ENCODE measurements at regions of chr16 and their contacts with region 1.

Region 1: DNA sequence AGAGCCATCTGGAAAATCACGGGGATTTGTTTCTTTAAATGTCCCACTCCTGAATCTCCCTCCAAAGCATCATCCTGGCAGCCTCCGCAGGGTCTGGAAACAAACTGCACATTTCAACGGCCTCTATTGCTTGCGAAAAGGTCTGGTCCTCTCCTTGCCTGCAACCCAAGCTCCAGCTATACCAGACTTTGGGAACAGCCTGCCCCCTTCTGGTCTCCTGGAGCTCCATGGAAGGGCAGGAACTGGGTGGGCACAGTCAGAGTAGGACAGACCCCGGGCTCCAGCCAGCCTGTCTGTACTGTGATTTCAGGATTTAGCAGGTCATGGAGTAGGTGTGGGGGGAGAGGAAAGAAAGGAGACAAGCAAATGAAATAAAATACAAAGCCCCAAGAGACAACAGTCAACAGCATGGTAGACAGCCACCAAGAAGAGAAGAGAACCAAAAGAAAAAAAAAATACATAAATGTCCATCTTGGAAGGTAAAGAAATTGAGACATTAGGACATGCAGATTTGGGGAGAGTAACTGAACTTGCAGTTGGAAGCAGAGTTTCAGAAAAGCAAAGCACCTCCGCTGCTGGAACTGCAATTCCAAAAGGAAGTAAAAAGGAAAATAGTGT is 2.7 kb downstream of the XYLT1 start:
- DNase-seq: peak in 12 of 14 experiments; percentile 18 to 67 (median 44)
- ATAC-seq: no peak
- H3K4me3 ChIP-seq: peak overlapping the region; percentile 2
- H3K4me3 Mint-ChIP-seq: peak overlapping the region; percentile 98
- H3K27ac ChIP-seq: no peak overlapping the region
- H3K27ac Mint-ChIP-seq: peak overlapping the region; percentile 85
- H3K4me1 ChIP-seq: peaks cover 34% of the 10 kb centered on the region
- H3K4me1 Mint-ChIP-seq: peaks cover 58% of the 10 kb centered on the region
- H3K27me3 ChIP-seq: no peaks in the 10 kb centered on the region
- H3K27me3 Mint-ChIP-seq: no peaks in the 10 kb centered on the region
- CTCF ChIP-seq: peak; percentile 48

Region 2: GRCh38 chr16:17194190-17194780 is 273.7 kb before region 1 on chr16:
- CTCF ChIA-PET with region 1: no interaction called
- POLR2A ChIA-PET with region 1: interaction called, 4 read pairs
- intact Hi-C with region 1: loop called in 1 of 2 experiments (anchors 2 kb)
- DNase-seq: peak; percentile 36 to 77 (median 50)
- ATAC-seq: no peak
- H3K4me3 ChIP-seq: no peak overlapping the region
- H3K4me3 Mint-ChIP-seq: no peak overlapping the region
- H3K27ac ChIP-seq: no peak overlapping the region
- H3K27ac Mint-ChIP-seq: no peak overlapping the region
- H3K4me1 ChIP-seq: no peaks in the 10 kb centered on the region
- H3K4me1 Mint-ChIP-seq: no peaks in the 10 kb centered on the region
- H3K27me3 ChIP-seq: no peaks in the 10 kb centered on the region
- H3K27me3 Mint-ChIP-seq: no peaks in the 10 kb centered on the region
- CTCF ChIP-seq: peak; percentile 73

Region 3: GRCh38 chr16:17211797-17212196 is 256.2 kb before region 1 on chr16:
- CTCF ChIA-PET with region 1: no interaction called
- POLR2A ChIA-PET with region 1: no interaction called
- intact Hi-C with region 1: loop called (anchors 5 to 10 kb)
- DNase-seq: peak; percentile 3 to 64 (median 20)
- ATAC-seq: peak; percentile 65
- H3K4me3 ChIP-seq: no peak overlapping the region
- H3K4me3 Mint-ChIP-seq: no peak overlapping the region
- H3K27ac ChIP-seq: no peak overlapping the region
- H3K27ac Mint-ChIP-seq: no peak overlapping the region
- H3K4me1 ChIP-seq: peaks cover 7% of the 10 kb centered on the region
- H3K4me1 Mint-ChIP-seq: peaks cover 31% of the 10 kb centered on the region
- H3K27me3 ChIP-seq: no peaks in the 10 kb centered on the region
- H3K27me3 Mint-ChIP-seq: no peaks in the 10 kb centered on the region
- CTCF ChIP-seq: peak; percentile 63

Region 4: GRCh38 chr16:17343028-17343427 is 125.0 kb before region 1 on chr16:
- CTCF ChIA-PET with region 1: no interaction called
- POLR2A ChIA-PET with region 1: interaction called, 3 read pairs
- intact Hi-C with region 1: loop called in 1 of 2 experiments (anchors 5 kb)
- DNase-seq: peak in 11 of 14 experiments; percentile 6 to 76 (median 34)
- ATAC-seq: peak; percentile 83
- H3K4me3 ChIP-seq: no peak overlapping the region
- H3K4me3 Mint-ChIP-seq: peak overlapping the region; percentile 75
- H3K27ac ChIP-seq: no peak overlapping the region
- H3K27ac Mint-ChIP-seq: peak overlapping the region; percentile 86
- H3K4me1 ChIP-seq: peaks cover 72% of the 10 kb centered on the region
- H3K4me1 Mint-ChIP-seq: peaks cover 89% of the 10 kb centered on the region
- H3K27me3 ChIP-seq: no peaks in the 10 kb centered on the region
- H3K27me3 Mint-ChIP-seq: no peaks in the 10 kb centered on the region
- CTCF ChIP-seq: no peak

Region 5: DNA sequence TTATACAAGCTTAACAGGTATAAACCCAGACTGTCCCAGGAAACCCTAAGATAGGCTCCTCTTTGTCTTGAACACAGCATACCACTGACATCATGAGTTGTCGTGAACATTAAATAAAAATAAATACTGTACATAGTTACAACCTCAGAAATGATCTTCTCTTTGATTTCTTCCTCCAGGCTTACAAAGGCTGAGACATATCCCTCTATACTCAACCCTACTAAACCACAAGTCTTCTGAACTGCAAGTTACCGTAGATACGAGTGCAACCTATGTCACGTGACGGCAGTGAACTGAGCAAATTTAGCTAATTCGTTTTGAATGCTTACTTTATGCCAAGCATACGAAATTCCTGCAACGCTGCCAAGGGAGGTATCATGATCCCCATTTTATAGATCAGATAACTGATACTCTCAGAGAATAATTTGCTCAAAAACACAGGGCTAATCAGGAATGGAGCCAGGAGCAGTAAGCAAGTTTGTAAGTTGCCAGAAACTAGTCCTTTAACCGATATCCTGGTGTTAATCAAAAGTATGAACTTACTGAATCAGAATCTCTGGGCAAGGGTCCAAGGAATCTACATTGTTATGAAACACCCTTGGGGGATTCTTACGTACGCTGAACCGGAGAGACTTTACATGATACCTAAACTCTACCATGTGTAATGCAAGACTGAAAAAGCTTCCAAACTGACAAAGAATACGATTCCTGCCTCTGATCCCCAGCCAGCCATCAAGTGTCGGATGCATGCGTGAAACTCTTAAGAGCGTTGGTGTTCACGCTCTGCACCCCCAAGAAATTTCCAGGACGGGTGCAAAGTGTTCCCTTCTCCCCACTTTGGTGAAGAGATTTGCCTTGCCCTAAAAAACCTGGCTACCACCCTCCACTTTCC is 103.5 kb before region 1 on chr16:
- CTCF ChIA-PET with region 1: no interaction called
- POLR2A ChIA-PET with region 1: interaction called, 19 read pairs
- intact Hi-C with region 1: loop called (anchors 1 to 5 kb)
- DNase-seq: peak in 13 of 14 experiments; percentile 37 to 92 (median 54)
- ATAC-seq: peak; percentile 82
- H3K4me3 ChIP-seq: peak overlapping the region; percentile 8
- H3K4me3 Mint-ChIP-seq: peak overlapping the region; percentile 40
- H3K27ac ChIP-seq: peak overlapping the region; percentile 89 to 92
- H3K27ac Mint-ChIP-seq: peak overlapping the region; percentile 93
- H3K4me1 ChIP-seq: peaks cover 91% of the 10 kb centered on the region
- H3K4me1 Mint-ChIP-seq: peaks cover 99% of the 10 kb centered on the region
- H3K27me3 ChIP-seq: no peaks in the 10 kb centered on the region
- H3K27me3 Mint-ChIP-seq: no peaks in the 10 kb centered on the region
- CTCF ChIP-seq: no peak

Region 6: DNA sequence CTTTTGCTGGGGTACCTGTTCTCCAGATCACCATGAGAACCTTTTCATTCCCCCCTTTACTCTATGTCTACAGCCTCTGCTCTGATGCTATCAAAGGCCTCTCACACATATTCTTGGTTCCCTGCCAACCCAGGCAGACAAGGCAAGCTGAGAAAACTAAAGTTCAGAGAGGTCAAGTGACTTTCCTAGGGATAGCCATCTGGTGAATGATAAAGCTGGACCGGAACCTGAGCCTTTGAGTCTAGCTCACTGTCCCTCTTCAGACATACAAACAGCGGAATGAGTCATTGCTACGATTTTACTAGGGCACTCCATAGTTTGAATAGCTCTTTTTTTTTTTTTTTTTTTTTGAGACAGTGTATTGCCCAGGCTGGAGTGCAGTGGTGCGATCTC is 70.5 kb before region 1 on chr16:
- CTCF ChIA-PET with region 1: no interaction called
- POLR2A ChIA-PET with region 1: no interaction called
- intact Hi-C with region 1: loop called in 1 of 2 experiments (anchors 5 kb)
- DNase-seq: peak in 7 of 14 experiments; percentile 15 to 71 (median 35)
- ATAC-seq: peak; percentile 19
- H3K4me3 ChIP-seq: no peak overlapping the region
- H3K4me3 Mint-ChIP-seq: peak overlapping the region; percentile 82
- H3K27ac ChIP-seq: peak overlapping the region; percentile 59 to 89
- H3K27ac Mint-ChIP-seq: peak overlapping the region; percentile 99
- H3K4me1 ChIP-seq: peaks cover 82% of the 10 kb centered on the region
- H3K4me1 Mint-ChIP-seq: peaks cover 73% of the 10 kb centered on the region
- H3K27me3 ChIP-seq: no peaks in the 10 kb centered on the region
- H3K27me3 Mint-ChIP-seq: no peaks in the 10 kb centered on the region
- CTCF ChIP-seq: no peak

Measured in CD4-positive, alpha-beta T cell (primary cell).